Activated naive CD4-positive, alpha-beta T cell treated with anti-CD3 and anti-CD28 coated beads for 36 hours (primary cell): ENCODE measurements at regions of chr17 and their contacts with region 1.

Region 1: GRCh38 chr17:27601069-27601975 is 29.7 kb upstream of the LGALS9 start:
- DNase-seq: peak; percentile 91
- H3K4me3 Mint-ChIP-seq: no peak overlapping the region
- H3K27ac Mint-ChIP-seq: no peak overlapping the region
- H3K4me1 Mint-ChIP-seq: peaks cover 11% of the 10 kb centered on the region
- H3K27me3 Mint-ChIP-seq: no peaks in the 10 kb centered on the region

Region 2: GRCh38 chr17:27236717-27237315 is 364.5 kb before region 1 on chr17:
- CTCF ChIA-PET with region 1: interaction called, 85 read pairs
- intact Hi-C with region 1: loop called (anchors 1 kb)
- DNase-seq: peak; percentile 90
- H3K4me3 Mint-ChIP-seq: no peak overlapping the region
- H3K27ac Mint-ChIP-seq: no peak overlapping the region
- H3K4me1 Mint-ChIP-seq: peaks cover 13% of the 10 kb centered on the region
- H3K27me3 Mint-ChIP-seq: no peaks in the 10 kb centered on the region

Region 3: GRCh38 chr17:27360507-27360906 is 240.8 kb before region 1 on chr17:
- CTCF ChIA-PET with region 1: interaction called, 63 read pairs
- intact Hi-C with region 1: no loop called
- DNase-seq: no peak
- H3K4me3 Mint-ChIP-seq: no peak overlapping the region
- H3K27ac Mint-ChIP-seq: no peak overlapping the region
- H3K4me1 Mint-ChIP-seq: no peaks in the 10 kb centered on the region
- H3K27me3 Mint-ChIP-seq: no peaks in the 10 kb centered on the region

Region 4: GRCh38 chr17:27455914-27456680 is 145.2 kb before region 1 on chr17 and contains the start of gene KSR1:
- CTCF ChIA-PET with region 1: interaction called, 78 read pairs
- intact Hi-C with region 1: loop called (anchors 1 kb)
- DNase-seq: peak; percentile 86
- H3K4me3 Mint-ChIP-seq: peak within 1 kb of the TSS; percentile 93
- H3K27ac Mint-ChIP-seq: peak within 1 kb of the TSS; percentile 86
- H3K4me1 Mint-ChIP-seq: peaks cover 42% of the 10 kb centered on the region
- H3K27me3 Mint-ChIP-seq: no peaks in the 10 kb centered on the region
- total RNA-seq, gene KSR1: 179 to 189 TPM

Region 5: GRCh38 chr17:27544350-27545131 is 56.8 kb before region 1 on chr17:
- CTCF ChIA-PET with region 1: interaction called, 47 read pairs
- intact Hi-C with region 1: loop called (anchors 2 kb)
- DNase-seq: peak; percentile 92
- H3K4me3 Mint-ChIP-seq: peak overlapping the region; percentile 50
- H3K27ac Mint-ChIP-seq: peak overlapping the region; percentile 96
- H3K4me1 Mint-ChIP-seq: peaks cover 76% of the 10 kb centered on the region
- H3K27me3 Mint-ChIP-seq: no peaks in the 10 kb centered on the region

Region 6: DNA sequence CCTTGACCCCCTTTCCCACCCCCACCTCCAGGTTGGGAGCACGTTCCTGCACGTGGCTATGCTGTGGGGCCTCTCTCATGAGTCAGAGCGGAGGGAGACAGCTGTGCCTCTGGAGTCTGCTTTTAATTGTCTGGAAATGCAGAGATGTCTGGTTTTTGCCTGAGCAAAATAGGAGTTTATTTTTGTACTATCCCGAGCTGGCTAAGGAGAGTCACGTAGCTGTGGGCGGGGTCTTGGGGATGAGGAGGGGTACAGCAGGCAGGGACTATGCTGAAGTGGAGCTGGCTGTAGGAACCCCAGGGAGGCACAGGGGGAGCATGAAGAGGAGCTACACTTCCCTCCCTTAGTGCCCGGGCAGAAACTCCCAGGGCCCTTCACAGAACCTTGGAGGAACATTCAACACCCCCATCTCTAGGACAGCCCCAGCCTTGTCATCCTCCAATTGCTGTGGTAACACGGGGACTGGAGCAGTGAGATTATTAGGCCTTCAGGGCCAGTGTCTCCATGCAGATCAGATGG is 15.1 kb before region 1 on chr17:
- CTCF ChIA-PET with region 1: interaction called, 54 read pairs
- intact Hi-C with region 1: no loop called
- DNase-seq: no peak
- H3K4me3 Mint-ChIP-seq: no peak overlapping the region
- H3K27ac Mint-ChIP-seq: no peak overlapping the region
- H3K4me1 Mint-ChIP-seq: peaks cover 3% of the 10 kb centered on the region
- H3K27me3 Mint-ChIP-seq: no peaks in the 10 kb centered on the region

Region 7: DNA sequence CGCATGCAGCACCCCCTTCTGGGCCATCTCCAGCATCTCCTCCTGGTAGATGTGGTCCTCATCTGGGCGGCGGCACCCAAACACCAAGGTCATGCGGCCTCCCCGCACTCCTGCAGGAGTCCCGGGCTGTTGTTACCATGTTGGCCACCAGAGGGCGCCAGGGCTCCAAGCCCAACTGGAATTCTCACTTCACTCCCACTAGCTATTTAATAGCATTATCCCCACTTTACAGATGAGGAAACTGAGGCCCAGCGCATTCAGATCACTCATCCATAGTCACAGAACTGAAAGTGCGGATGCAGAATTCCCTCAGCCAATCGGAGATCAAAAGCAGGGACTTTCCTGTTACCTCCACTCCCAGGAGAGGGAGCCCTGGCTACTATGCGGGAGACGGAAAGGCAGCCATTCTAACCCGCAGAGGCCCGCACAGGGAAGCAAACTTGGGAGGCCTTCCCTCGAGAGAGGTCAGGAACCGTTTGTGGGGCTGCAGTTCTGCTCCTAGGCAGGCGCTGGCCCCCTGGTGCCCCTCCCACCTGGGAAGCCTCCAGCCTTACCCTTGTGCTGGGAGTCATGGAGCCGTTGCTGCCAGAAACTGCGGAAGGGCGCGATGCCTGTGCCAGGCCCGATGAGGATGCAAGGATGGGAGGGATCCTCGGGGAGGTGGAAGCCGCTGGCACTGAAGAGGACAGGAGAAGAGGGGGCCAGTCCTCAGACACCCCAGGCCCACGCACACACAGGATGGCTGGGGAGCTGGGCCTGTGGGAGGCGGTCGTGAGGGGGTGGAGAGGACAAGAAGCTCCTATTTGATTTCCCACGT is 159.0 kb after region 1 on chr17:
- CTCF ChIA-PET with region 1: interaction called, 5 read pairs
- intact Hi-C with region 1: loop called (anchors 1 kb)
- DNase-seq: peak; percentile 83
- H3K4me3 Mint-ChIP-seq: no peak overlapping the region
- H3K27ac Mint-ChIP-seq: no peak overlapping the region
- H3K4me1 Mint-ChIP-seq: no peaks in the 10 kb centered on the region
- H3K27me3 Mint-ChIP-seq: no peaks in the 10 kb centered on the region